PC-9 (cell line): ENCODE measurements at regions of chr14 and their contacts with region 1.

Region 1: GRCh38 chr14:24806061-24806678 is 172.2 kb upstream of the GZMB start:
- DNase-seq: peak; percentile 37 to 62
- H3K4me3 ChIP-seq: no peak overlapping the region
- H3K27ac ChIP-seq: no peak overlapping the region
- H3K4me1 ChIP-seq: no peaks in the 10 kb centered on the region
- H3K27me3 ChIP-seq: no peaks in the 10 kb centered on the region
- CTCF ChIP-seq: peak; percentile 80

Region 2: GRCh38 chr14:25032092-25032784 is 226.1 kb after region 1 on chr14:
- CTCF ChIA-PET with region 1: no interaction called
- POLR2A ChIA-PET with region 1: no interaction called
- intact Hi-C with region 1: loop called (anchors 2 kb)
- DNase-seq: no peak
- H3K4me3 ChIP-seq: no peak overlapping the region
- H3K27ac ChIP-seq: no peak overlapping the region
- H3K4me1 ChIP-seq: no peaks in the 10 kb centered on the region
- H3K27me3 ChIP-seq: no peaks in the 10 kb centered on the region
- CTCF ChIP-seq: no peak; the same call in 1 of the 2 replicates

Region 3: GRCh38 chr14:25049568-25050268 is 243.5 kb after region 1 on chr14 and contains the start of gene STXBP6:
- CTCF ChIA-PET with region 1: no interaction called
- POLR2A ChIA-PET with region 1: no interaction called
- intact Hi-C with region 1: loop called (anchors 5 kb)
- DNase-seq: peak in 1 of 2 experiments; percentile 66
- H3K4me3 ChIP-seq: peak within 1 kb of the TSS; percentile 52
- H3K27ac ChIP-seq: no peak within 1 kb of the TSS
- H3K4me1 ChIP-seq: no peaks in the 10 kb centered on the region
- H3K27me3 ChIP-seq: peaks cover 33% of the 10 kb centered on the region
- CTCF ChIP-seq: no peak
- total RNA-seq, gene STXBP6: 10.0 and 12.3 TPM in 2 replicates

Region 4: GRCh38 chr14:25132732-25133422 is 326.7 kb after region 1 on chr14:
- CTCF ChIA-PET with region 1: interaction called, 11 read pairs
- POLR2A ChIA-PET with region 1: no interaction called
- intact Hi-C with region 1: loop called (anchors 1 kb)
- DNase-seq: peak in 1 of 2 experiments; percentile 49
- H3K4me3 ChIP-seq: no peak overlapping the region
- H3K27ac ChIP-seq: no peak overlapping the region
- H3K4me1 ChIP-seq: no peaks in the 10 kb centered on the region
- H3K27me3 ChIP-seq: no peaks in the 10 kb centered on the region
- CTCF ChIP-seq: peak; percentile 75

Region 5: GRCh38 chr14:25150934-25151790 is 345.0 kb after region 1 on chr14:
- CTCF ChIA-PET with region 1: interaction called, 3 read pairs
- POLR2A ChIA-PET with region 1: no interaction called
- intact Hi-C with region 1: loop called (anchors 1 kb)
- DNase-seq: peak in 1 of 2 experiments; percentile 38
- H3K4me3 ChIP-seq: no peak overlapping the region
- H3K27ac ChIP-seq: no peak overlapping the region
- H3K4me1 ChIP-seq: no peaks in the 10 kb centered on the region
- H3K27me3 ChIP-seq: no peaks in the 10 kb centered on the region
- CTCF ChIP-seq: peak; percentile 78

Region 6: DNA sequence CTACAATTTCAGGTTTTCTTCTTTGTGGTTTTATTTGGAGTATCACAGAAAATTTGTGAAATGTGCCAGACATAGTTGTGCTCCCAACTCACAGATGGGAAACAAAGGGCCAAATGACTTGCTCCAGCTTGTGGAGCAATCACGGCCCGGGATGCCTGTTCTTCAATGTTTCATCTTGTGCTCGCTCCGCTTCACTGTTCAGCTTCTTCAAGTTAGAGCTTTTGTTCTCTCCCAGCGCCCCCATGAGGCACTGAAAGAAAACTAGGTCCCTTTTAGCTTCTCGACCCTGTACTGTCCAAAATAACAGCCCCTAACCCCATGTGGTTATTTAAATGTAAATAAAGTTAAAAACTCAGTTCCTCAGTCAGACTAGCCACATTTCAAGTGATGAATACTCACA is 431.7 kb after region 1 on chr14:
- CTCF ChIA-PET with region 1: interaction called, 3 read pairs
- POLR2A ChIA-PET with region 1: no interaction called
- intact Hi-C with region 1: loop called (anchors 10 kb)
- DNase-seq: peak in 1 of 2 experiments; percentile 8
- H3K4me3 ChIP-seq: no peak overlapping the region
- H3K27ac ChIP-seq: no peak overlapping the region
- H3K4me1 ChIP-seq: no peaks in the 10 kb centered on the region
- H3K27me3 ChIP-seq: no peaks in the 10 kb centered on the region
- CTCF ChIP-seq: no peak

Region 7: DNA sequence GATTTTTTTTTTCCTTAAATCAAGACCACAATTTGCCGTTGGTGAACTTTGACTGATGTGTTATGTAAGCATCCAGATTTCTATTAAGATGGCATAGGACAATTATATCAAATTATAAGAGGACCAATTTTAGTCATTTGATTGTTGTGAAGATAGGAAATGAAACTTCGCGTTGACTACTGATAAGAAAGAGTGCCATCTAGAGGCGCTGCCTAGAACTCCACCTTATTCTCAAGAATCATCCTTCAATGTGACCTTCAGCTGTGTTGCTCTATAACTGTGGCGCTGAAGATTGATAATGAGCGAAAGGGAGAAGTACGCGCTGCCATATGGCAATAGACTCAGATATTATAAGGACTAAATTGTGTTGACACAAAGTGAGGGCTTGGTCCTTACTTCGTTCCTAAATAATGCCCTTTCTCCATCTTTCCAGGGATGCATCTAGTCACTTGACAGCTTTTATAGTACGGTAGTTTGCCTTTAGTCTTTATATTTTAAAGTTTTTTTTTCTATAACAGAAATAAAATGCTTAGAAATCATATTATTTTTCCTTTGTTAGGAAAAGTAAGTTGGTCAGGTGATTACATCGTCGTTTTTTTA is 594.5 kb after region 1 on chr14:
- CTCF ChIA-PET with region 1: no interaction called
- POLR2A ChIA-PET with region 1: no interaction called
- intact Hi-C with region 1: loop called (anchors 2 kb)
- DNase-seq: peak; percentile 16 to 40
- H3K4me3 ChIP-seq: no peak overlapping the region
- H3K27ac ChIP-seq: no peak overlapping the region
- H3K4me1 ChIP-seq: no peaks in the 10 kb centered on the region
- H3K27me3 ChIP-seq: no peaks in the 10 kb centered on the region
- CTCF ChIP-seq: peak; percentile 68